Esophagus squamous epithelium (tissue), 5 donors: ENCODE measurements at regions of chr7 and their contacts with region 1.

Region 1: DNA sequence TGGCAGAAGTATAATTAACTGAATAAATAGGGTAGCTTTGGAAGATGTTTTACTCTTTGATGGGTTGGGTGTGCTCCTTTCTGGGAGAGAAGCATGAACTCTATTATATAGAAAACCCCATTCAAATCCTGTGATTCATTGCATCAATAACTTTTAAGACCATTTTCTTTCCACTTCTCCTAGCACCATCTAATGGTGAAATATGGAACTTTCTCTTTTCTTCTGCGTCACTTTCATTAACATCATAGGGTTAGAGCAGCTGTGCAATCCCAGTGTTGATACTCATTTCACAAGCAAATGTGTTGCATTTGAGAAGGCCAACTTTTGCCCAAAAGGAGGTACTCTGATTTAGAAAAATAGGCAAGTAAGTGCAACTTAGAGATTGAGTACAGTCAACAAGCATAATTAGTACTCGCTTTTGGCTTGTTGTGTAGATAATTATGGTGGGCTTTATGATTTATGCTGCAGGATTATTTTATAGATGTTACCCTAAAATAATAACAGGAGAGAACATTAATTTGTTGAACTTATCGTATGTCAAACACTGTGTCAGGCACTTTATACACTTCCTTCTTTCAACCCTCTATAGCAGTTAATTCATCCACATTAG is 92.9 kb downstream of the CPED1 start:
- DNase-seq: no peak
- H3K4me3 ChIP-seq: no peak overlapping the region
- H3K27ac ChIP-seq: peak overlapping the region in 1 of 4 donors; percentile 25
- H3K4me1 ChIP-seq: no peaks in the 10 kb centered on the region
- H3K27me3 ChIP-seq: no peaks in the 10 kb centered on the region
- CTCF ChIP-seq: peak; percentile 30 to 77 (median 63)
- POLR2A ChIP-seq: no peak

Region 2: DNA sequence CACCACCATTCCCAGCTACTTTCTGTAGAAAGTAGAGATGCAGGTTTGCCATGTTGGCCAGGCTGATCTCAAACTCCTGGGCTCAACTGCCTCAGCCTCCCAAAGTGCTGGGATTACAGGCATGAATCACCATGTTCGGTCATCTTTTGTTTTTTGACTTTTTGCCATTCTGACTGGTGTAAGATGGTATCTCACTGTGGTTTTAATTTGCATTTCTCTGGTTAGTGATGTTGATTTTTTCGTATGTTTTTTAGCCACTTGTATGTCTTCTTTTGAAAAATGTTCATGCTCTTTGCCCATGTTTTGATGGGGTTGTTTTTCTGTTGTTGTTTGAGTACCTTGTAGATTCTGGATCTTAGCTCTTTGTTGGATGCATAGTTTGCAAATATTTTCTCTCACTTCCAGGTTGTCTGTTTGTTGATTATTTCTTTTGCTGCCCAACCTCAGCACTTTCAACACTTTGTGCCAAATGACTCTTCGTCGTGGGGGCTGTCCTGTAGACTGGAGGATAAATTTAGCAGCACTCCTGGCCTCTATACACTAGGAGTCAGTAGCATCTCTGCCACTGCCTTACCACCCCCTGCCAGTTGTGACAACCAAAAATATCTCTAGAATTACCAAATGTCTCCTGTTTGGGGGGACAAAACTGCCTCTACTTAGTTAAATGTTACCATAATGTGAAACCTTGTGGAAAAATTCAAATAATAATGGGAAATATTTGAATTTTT is 99.4 kb before region 1 on chr7:
- intact Hi-C with region 1: loop called (anchors 5 kb)
- DNase-seq: no peak
- H3K4me3 ChIP-seq: no peak overlapping the region
- H3K27ac ChIP-seq: no peak overlapping the region
- H3K4me1 ChIP-seq: no peaks in the 10 kb centered on the region
- H3K27me3 ChIP-seq: no peaks in the 10 kb centered on the region
- CTCF ChIP-seq: no peak
- POLR2A ChIP-seq: no peak